CD4-positive, alpha-beta memory T cell (primary cell): ENCODE measurements at regions of chr7 and their contacts with region 1.

Region 1: DNA sequence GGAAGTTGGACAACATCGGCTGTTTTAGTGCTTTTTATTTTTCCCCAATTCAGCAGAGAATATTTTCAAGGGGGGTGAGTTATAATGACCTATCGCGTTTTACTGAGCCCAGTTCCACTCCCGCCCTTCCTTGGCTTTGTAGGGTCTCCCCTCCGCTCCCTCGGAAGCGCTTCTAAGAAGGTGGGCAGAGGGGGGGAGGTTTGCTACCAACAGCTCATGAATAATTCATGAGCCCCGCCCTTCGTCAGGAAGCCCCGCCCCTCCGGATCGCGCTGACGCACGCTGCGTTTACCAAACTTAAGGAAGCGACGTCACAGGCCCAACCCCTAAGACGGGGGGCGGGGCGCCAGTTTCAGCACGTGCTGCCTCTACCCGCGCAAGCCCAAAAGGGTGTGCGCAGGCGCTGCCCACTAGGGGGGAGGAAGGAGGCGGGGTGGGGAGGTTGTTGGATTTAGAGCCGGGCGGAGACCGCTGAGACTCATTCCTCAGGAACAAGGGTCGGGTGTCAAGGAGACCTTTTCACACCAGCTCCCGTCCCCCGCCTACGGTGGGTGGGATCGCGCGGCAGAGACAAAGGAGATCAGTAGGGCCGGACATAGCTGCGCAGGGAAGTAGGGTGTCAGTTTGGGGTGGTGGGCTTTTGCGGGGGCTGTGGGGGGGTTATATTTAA is 529 bp upstream of the MEPCE start:
- DNase-seq: peak; percentile 100
- H3K4me3 ChIP-seq: peak overlapping the region; percentile 83 to 95
- H3K4me3 Mint-ChIP-seq: peak overlapping the region; percentile 91 to 100 (median 99)
- H3K27ac ChIP-seq: peak overlapping the region; percentile 100
- H3K27ac Mint-ChIP-seq: peak overlapping the region; percentile 99 to 100 (median 100)
- H3K4me1 ChIP-seq: peaks cover 41% of the 10 kb centered on the region
- H3K4me1 Mint-ChIP-seq: peaks cover 18 to 62% (median 36%) of the 10 kb centered on the region in 4 donors
- H3K27me3 ChIP-seq: no peaks in the 10 kb centered on the region
- H3K27me3 Mint-ChIP-seq: peaks cover 0 to 5% of the 10 kb centered on the region in 2 donors

Region 2: GRCh38 chr7:99408379-99409191 is 1020.5 kb before region 1 on chr7 and contains the starts of genes BUD31 and PDAP1:
- CTCF ChIA-PET with region 1: no interaction called
- POLR2A ChIA-PET with region 1: interaction called, 11 read pairs
- intact Hi-C with region 1: no loop called
- DNase-seq: peak; percentile 96 to 100 (median 98)
- H3K4me3 ChIP-seq: peak within 1 kb of the TSS; percentile 94 to 97
- H3K4me3 Mint-ChIP-seq: peak within 1 kb of the TSS; percentile 94 to 99 (median 96)
- H3K27ac ChIP-seq: peak within 1 kb of the TSS; percentile 93
- H3K27ac Mint-ChIP-seq: peak within 1 kb of the TSS; percentile 88 to 100 (median 98)
- H3K4me1 ChIP-seq: peaks cover 45% of the 10 kb centered on the region
- H3K4me1 Mint-ChIP-seq: peaks cover 29 to 61% (median 48%) of the 10 kb centered on the region in 4 donors
- H3K27me3 ChIP-seq: no peaks in the 10 kb centered on the region
- H3K27me3 Mint-ChIP-seq: no peaks in the 10 kb centered on the region
- total RNA-seq, gene BUD31: 60.0 to 61.3 TPM
- total RNA-seq, gene PDAP1: 66.0 to 67.0 TPM

Region 3: DNA sequence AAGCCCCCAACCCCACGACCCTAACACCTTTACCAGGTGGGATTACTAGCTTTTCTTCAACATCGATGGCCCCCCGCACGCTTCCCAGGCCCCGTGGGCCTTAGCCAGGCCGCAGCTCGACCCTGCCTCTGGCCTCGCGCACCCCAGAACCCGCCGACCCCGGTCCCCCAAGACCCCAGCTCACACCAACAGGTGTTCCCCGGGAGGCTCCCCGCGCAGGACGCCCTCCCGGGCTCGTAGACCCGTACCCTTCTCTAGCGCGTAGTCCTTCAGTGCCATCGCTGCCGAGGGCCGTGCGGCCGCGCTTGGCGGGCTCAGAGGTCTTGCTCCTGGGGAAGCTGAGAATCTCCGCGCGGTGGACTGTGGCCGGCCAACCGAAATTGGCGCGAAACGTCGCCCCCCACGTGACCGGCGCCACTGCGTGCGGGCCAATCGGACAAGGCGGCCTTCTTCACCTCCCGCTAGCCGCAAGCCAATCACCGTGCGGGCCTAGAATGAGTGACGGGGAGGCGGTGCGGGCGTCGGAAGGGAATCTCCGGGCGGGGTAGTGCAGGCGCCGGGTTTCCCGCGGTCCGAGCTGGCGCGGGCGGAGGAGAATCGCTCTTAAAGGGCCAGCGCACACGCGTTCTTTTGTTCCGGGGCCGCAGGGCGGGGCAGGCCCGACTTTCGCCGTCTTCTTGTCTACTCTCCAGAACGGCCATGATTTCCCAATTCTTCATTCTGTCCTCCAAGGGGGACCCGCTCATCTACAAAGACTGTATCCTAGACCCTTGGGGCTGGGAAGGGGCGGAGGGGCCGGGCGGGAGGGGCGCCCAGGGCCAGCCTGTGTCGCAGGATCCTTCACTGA is 327.9 kb before region 1 on chr7 and contains the starts of genes AP4M1 and MCM7:
- CTCF ChIA-PET with region 1: no interaction called
- POLR2A ChIA-PET with region 1: interaction called, 26 read pairs
- intact Hi-C with region 1: no loop called
- DNase-seq: peak; percentile 94 to 97 (median 94)
- H3K4me3 ChIP-seq: peak within 1 kb of the TSS; percentile 95
- H3K4me3 Mint-ChIP-seq: peak within 1 kb of the TSS; percentile 92 to 95 (median 93)
- H3K27ac ChIP-seq: peak within 1 kb of the TSS; percentile 96
- H3K27ac Mint-ChIP-seq: peak within 1 kb of the TSS; percentile 93 to 99 (median 97)
- H3K4me1 ChIP-seq: peaks cover 29% of the 10 kb centered on the region
- H3K4me1 Mint-ChIP-seq: peaks cover 22 to 46% (median 34%) of the 10 kb centered on the region in 4 donors
- H3K27me3 ChIP-seq: no peaks in the 10 kb centered on the region
- H3K27me3 Mint-ChIP-seq: peaks cover 0 to 2% of the 10 kb centered on the region in 2 donors
- total RNA-seq, gene AP4M1: 12.1 to 14.9 TPM
- total RNA-seq, gene MCM7: 164 to 173 TPM

Region 4: GRCh38 chr7:100396421-100396982 is 32.6 kb before region 1 on chr7:
- CTCF ChIA-PET with region 1: no interaction called
- POLR2A ChIA-PET with region 1: interaction called, 5 read pairs
- intact Hi-C with region 1: loop called (anchors 1 kb)
- DNase-seq: peak; percentile 51 to 70 (median 59)
- H3K4me3 ChIP-seq: no peak overlapping the region
- H3K4me3 Mint-ChIP-seq: peak overlapping the region; percentile 47 to 85 (median 80)
- H3K27ac ChIP-seq: no peak overlapping the region
- H3K27ac Mint-ChIP-seq: peak overlapping the region; percentile 20 to 95 (median 89)
- H3K4me1 ChIP-seq: peaks cover 21% of the 10 kb centered on the region
- H3K4me1 Mint-ChIP-seq: peaks cover 11 to 28% (median 20%) of the 10 kb centered on the region in 4 donors
- H3K27me3 ChIP-seq: no peaks in the 10 kb centered on the region
- H3K27me3 Mint-ChIP-seq: no peaks in the 10 kb centered on the region

Region 5: DNA sequence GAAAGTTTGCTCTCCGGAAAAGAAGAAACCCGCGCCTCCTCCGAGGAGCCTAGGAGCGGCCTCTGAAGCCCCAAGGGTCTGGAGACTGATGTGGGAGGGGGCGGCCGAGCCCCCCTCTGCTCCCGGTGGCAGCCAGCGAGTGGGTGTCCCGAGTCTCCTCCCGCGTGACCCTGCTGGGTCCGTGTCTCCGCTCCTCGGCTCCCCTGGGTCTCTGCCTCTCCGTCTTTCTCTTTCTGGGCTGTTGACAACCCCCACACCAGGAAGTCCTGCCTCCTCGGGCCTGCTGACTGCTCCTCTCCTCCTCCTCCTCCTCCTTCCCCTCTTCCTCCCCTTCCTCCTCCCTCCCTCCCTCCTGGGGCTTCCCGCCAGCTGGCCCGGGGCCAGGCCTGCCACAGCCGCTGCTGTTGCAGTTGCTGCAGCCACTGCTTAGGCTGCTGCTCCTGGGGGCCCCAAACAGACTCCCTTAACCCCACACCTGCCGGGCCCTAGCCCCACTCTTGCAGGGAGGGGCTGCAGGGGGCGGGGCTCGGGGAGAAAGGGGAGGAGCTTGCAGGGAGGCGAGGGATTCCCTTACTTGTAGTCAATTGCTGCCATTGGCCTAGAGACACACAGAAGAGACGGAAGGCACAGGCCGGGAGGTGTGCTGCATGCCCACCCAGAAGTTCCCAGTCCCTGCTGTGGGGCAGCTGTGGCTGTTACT is 50.0 kb after region 1 on chr7 and contains the start of gene TSC22D4:
- CTCF ChIA-PET with region 1: interaction called, 3 read pairs
- POLR2A ChIA-PET with region 1: interaction called, 49 read pairs
- intact Hi-C with region 1: loop called (anchors 1 kb)
- DNase-seq: peak; percentile 93 to 97 (median 95)
- H3K4me3 ChIP-seq: peak within 1 kb of the TSS; percentile 81 to 95
- H3K4me3 Mint-ChIP-seq: peak within 1 kb of the TSS; percentile 82 to 99 (median 98)
- H3K27ac ChIP-seq: peak within 1 kb of the TSS; percentile 75
- H3K27ac Mint-ChIP-seq: peak within 1 kb of the TSS; percentile 75 to 99 (median 94)
- H3K4me1 ChIP-seq: peaks cover 58% of the 10 kb centered on the region
- H3K4me1 Mint-ChIP-seq: peaks cover 28 to 57% (median 38%) of the 10 kb centered on the region in 4 donors
- H3K27me3 ChIP-seq: no peaks in the 10 kb centered on the region
- H3K27me3 Mint-ChIP-seq: no peaks in the 10 kb centered on the region
- total RNA-seq, gene TSC22D4: 144 to 154 TPM

Region 6: DNA sequence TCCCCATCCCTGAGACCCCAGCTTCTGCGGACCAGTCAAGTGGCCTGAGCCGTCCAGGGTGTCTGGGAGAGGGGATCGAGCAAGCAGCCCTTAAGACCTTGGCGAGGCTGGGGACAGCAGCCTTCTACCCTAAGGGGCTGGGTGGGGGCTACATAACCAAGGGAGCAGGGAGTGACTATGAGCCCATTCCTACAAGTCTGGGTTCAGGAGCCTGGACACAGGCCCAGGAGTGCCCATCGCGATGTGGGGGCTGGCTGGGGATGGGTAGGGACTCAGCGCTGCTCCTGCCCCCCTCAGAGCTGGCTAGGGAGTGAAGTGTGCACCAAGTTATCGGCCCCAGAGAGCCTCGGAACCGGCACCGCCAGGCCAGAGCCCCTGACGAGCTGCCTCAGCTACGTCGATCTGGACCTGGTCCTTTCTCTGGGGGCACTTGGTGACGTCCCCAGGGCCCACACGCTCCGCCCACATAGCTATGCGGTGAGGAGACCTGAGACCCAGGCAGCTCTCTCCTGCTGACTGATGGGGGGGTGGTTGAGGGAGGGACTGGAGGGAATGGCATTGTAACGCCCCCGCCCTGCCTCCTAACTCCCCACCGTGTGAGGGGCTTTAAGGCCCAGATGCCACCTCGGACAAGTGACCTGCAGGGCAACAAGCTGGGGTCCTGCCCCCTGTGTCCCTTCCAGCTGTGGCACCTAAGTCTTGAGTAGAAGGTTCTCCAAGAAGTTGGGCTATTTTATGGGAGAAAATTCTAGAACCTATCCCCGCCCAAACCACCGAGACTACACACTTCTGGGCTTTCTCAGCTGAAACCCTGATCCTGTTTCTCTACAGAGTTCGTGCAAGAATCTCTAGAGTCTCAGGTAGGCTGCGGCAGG is 142.1 kb after region 1 on chr7:
- CTCF ChIA-PET with region 1: no interaction called
- POLR2A ChIA-PET with region 1: no interaction called
- intact Hi-C with region 1: no loop called
- DNase-seq: peak in 1 of 5 donors; percentile 52
- H3K4me3 ChIP-seq: no peak overlapping the region
- H3K4me3 Mint-ChIP-seq: peak overlapping the region in 4 of 8 donors; percentile 21 to 71 (median 49)
- H3K27ac ChIP-seq: no peak overlapping the region
- H3K27ac Mint-ChIP-seq: peak overlapping the region; percentile 25 to 84 (median 42)
- H3K4me1 ChIP-seq: peaks cover 37% of the 10 kb centered on the region
- H3K4me1 Mint-ChIP-seq: peaks cover 14 to 51% (median 27%) of the 10 kb centered on the region in 4 donors
- H3K27me3 ChIP-seq: no peaks in the 10 kb centered on the region
- H3K27me3 Mint-ChIP-seq: no peaks in the 10 kb centered on the region

Region 7: GRCh38 chr7:100604028-100604975 is 175.2 kb after region 1 on chr7:
- CTCF ChIA-PET with region 1: no interaction called
- POLR2A ChIA-PET with region 1: interaction called, 18 read pairs
- intact Hi-C with region 1: no loop called
- DNase-seq: peak; percentile 63 to 83 (median 68)
- H3K4me3 ChIP-seq: peak overlapping the region; percentile 34 to 58
- H3K4me3 Mint-ChIP-seq: peak overlapping the region; percentile 78 to 93 (median 87)
- H3K27ac ChIP-seq: peak overlapping the region; percentile 64
- H3K27ac Mint-ChIP-seq: peak overlapping the region; percentile 71 to 95 (median 91)
- H3K4me1 ChIP-seq: peaks cover 21% of the 10 kb centered on the region
- H3K4me1 Mint-ChIP-seq: peaks cover 9 to 35% (median 16%) of the 10 kb centered on the region in 4 donors
- H3K27me3 ChIP-seq: no peaks in the 10 kb centered on the region
- H3K27me3 Mint-ChIP-seq: no peaks in the 10 kb centered on the region

Region 8: GRCh38 chr7:100889761-100890634 is 460.9 kb after region 1 on chr7:
- CTCF ChIA-PET with region 1: no interaction called
- POLR2A ChIA-PET with region 1: interaction called, 7 read pairs
- intact Hi-C with region 1: loop called (anchors 2 kb)
- DNase-seq: peak; percentile 90 to 93 (median 91)
- H3K4me3 ChIP-seq: peak overlapping the region; percentile 61 to 70
- H3K4me3 Mint-ChIP-seq: peak overlapping the region; percentile 84 to 95 (median 88)
- H3K27ac ChIP-seq: peak overlapping the region; percentile 39
- H3K27ac Mint-ChIP-seq: peak overlapping the region in 6 of 7 donors; percentile 22 to 93 (median 78)
- H3K4me1 ChIP-seq: peaks cover 50% of the 10 kb centered on the region
- H3K4me1 Mint-ChIP-seq: peaks cover 28 to 64% (median 40%) of the 10 kb centered on the region in 4 donors
- H3K27me3 ChIP-seq: peaks cover 2% of the 10 kb centered on the region
- H3K27me3 Mint-ChIP-seq: peaks cover 12 to 18% of the 10 kb centered on the region in 2 donors